MCF 10A (cell line): ENCODE measurements at regions of chr14 and their contacts with region 1.

Region 1: GRCh38 chr14:93115069-93115820 is 480 bp downstream of the ITPK1 start:
- DNase-seq: peak; percentile 82
- H3K4me3 Mint-ChIP-seq: peak overlapping the region; percentile 84
- H3K27ac Mint-ChIP-seq: no peak overlapping the region
- H3K4me1 Mint-ChIP-seq: peaks cover 19% of the 10 kb centered on the region
- H3K27me3 Mint-ChIP-seq: no peaks in the 10 kb centered on the region
- CTCF ChIP-seq: no peak

Region 2: DNA sequence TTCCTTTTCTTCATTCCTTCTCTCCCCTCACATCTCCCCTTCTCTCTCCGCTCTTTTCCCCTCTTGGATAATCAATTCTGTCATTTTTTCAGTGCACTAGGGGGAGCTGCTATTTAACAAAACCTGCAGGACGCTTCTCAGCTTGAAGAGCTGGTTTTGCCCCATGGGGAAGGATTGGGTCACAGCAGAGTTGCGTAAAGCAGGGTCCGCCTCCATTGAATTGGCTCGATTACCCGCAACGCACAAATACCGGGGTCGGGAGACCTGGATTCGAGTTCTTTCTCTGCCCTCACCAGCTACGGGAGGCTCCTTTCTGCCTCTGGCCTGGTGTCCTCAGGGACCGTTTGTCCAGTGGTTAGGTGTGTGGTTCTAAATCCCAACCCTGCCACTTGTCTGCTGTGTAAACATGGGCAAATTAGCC is 234.4 kb before region 1 on chr14:
- CTCF ChIA-PET with region 1: interaction called, 4 read pairs
- POLR2A ChIA-PET with region 1: interaction called, 3 read pairs
- intact Hi-C with region 1: loop called (anchors 2 kb)
- DNase-seq: peak; percentile 80
- H3K4me3 Mint-ChIP-seq: no peak overlapping the region
- H3K27ac Mint-ChIP-seq: no peak overlapping the region
- H3K4me1 Mint-ChIP-seq: peaks cover 6% of the 10 kb centered on the region
- H3K27me3 Mint-ChIP-seq: peaks cover 66% of the 10 kb centered on the region
- CTCF ChIP-seq: peak; percentile 59

Region 3: DNA sequence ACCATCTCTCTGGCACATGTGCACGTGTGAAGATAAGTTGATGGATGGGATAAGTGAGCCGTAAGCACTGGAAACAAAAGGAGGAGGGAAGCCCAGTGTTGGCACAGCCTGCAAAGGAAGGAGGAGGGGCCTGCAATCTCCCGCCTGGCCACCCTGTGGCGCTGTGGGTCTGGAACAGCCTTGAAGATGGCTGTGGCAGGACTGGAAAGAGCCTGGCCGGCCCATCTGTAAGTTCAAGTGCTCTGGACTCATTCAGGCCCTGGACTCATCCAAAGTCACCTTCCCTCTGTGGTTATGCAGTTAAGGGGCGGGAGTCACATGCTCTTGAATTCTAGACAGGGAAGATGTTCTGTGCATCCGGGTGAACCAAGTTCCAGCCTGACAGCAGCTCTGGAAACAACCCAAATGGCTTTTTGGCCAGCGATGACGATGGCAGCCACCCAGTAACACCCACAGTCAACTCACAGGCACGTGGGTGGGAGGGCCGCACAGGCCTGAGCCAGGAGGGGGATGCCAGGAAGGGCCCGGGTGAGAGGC is 141.9 kb before region 1 on chr14:
- CTCF ChIA-PET with region 1: interaction called, 8 read pairs
- POLR2A ChIA-PET with region 1: no interaction called
- intact Hi-C with region 1: loop called (anchors 1 kb)
- DNase-seq: peak; percentile 81
- H3K4me3 Mint-ChIP-seq: no peak overlapping the region
- H3K27ac Mint-ChIP-seq: peak overlapping the region; percentile 92
- H3K4me1 Mint-ChIP-seq: peaks cover 19% of the 10 kb centered on the region
- H3K27me3 Mint-ChIP-seq: no peaks in the 10 kb centered on the region
- CTCF ChIP-seq: peak; percentile 84

Region 4: GRCh38 chr14:93103392-93104080 is 11.7 kb before region 1 on chr14:
- CTCF ChIA-PET with region 1: interaction called, 26 read pairs
- POLR2A ChIA-PET with region 1: interaction called, 10 read pairs
- intact Hi-C with region 1: no loop called
- DNase-seq: peak; percentile 74
- H3K4me3 Mint-ChIP-seq: peak overlapping the region; percentile 61
- H3K27ac Mint-ChIP-seq: peak overlapping the region; percentile 87
- H3K4me1 Mint-ChIP-seq: peaks cover 26% of the 10 kb centered on the region
- H3K27me3 Mint-ChIP-seq: no peaks in the 10 kb centered on the region
- CTCF ChIP-seq: no peak

Region 5: DNA sequence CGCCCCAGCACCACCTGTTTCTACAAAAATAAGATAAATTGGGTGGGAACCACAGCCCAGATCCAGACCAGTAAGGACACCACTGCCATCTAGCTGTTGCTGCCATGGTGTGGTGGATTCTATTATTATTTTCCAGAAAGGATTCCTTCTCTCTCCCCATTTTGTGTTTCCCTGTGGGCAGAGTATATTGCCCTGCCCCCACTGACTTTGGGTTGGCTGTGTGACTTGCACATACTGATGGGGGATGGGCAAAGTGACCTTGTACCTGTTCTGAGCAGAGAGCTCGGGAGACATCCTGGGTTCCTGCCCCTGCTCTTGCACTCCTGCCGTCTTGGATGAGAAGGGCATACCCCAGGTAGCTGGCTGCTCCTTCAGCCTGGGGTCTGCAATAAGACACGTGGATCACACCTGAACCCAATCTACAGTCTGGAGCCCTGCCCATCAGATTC is 45.1 kb after region 1 on chr14:
- CTCF ChIA-PET with region 1: interaction called, 10 read pairs
- POLR2A ChIA-PET with region 1: interaction called, 5 read pairs
- intact Hi-C with region 1: loop called (anchors 1 kb)
- DNase-seq: peak; percentile 54
- H3K4me3 Mint-ChIP-seq: no peak overlapping the region
- H3K27ac Mint-ChIP-seq: no peak overlapping the region
- H3K4me1 Mint-ChIP-seq: no peaks in the 10 kb centered on the region
- H3K27me3 Mint-ChIP-seq: no peaks in the 10 kb centered on the region
- CTCF ChIP-seq: peak; percentile 63

Region 6: DNA sequence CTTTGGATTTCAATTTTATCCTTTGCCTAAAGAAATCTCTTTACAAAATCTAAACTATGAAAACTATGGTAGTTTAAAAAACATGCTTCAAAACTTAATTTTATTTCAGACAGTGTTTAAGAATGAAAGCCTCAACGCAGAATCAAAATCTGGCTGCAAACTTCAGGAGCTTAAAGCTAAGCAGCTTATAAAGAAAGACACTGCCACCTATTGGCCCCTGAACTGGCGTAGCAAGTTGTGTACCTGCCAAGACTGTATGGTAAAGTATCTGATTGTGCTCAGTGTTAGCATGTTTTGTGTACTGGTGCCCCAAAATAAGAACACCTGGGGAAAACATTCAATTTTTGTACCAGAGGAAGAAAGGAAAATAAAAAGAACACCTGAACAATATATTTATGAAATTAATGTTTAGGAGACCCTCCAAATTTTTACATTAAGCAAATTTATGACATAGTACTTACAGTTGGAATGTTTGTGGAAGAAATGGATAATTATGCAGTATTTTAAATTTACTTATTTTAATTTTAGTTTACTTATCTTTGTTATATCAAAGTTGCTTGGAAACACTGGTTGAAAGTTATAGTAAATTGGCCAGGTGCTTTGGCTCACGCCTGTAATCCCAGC is 104.0 kb after region 1 on chr14:
- CTCF ChIA-PET with region 1: interaction called, 13 read pairs
- POLR2A ChIA-PET with region 1: interaction called, 3 read pairs
- intact Hi-C with region 1: no loop called
- DNase-seq: peak; percentile 67
- H3K4me3 Mint-ChIP-seq: no peak overlapping the region
- H3K27ac Mint-ChIP-seq: no peak overlapping the region
- H3K4me1 Mint-ChIP-seq: no peaks in the 10 kb centered on the region
- H3K27me3 Mint-ChIP-seq: no peaks in the 10 kb centered on the region
- CTCF ChIP-seq: peak; percentile 78